GM12878 (cell line): ENCODE measurements at regions of chr15 and their contacts with region 1.

Region 1: GRCh38 chr15:81265944-81266775 is 57.8 kb downstream of the STARD5 start:
- DNase-seq: no peak
- ATAC-seq: peak; percentile 97
- H3K4me3 ChIP-seq: no peak overlapping the region
- H3K27ac ChIP-seq: no peak overlapping the region
- H3K4me1 ChIP-seq: peaks cover 22% of the 10 kb centered on the region
- H3K27me3 ChIP-seq: no peaks in the 10 kb centered on the region; a peak in 1 of 4 replicates
- CTCF ChIP-seq: peak; percentile 93 to 94 (median 94)
- EP300 ChIP-seq: no peak
- POLR2A ChIP-seq: no peak
- RAD21 ChIP-seq: peak; percentile 92

Region 2: DNA sequence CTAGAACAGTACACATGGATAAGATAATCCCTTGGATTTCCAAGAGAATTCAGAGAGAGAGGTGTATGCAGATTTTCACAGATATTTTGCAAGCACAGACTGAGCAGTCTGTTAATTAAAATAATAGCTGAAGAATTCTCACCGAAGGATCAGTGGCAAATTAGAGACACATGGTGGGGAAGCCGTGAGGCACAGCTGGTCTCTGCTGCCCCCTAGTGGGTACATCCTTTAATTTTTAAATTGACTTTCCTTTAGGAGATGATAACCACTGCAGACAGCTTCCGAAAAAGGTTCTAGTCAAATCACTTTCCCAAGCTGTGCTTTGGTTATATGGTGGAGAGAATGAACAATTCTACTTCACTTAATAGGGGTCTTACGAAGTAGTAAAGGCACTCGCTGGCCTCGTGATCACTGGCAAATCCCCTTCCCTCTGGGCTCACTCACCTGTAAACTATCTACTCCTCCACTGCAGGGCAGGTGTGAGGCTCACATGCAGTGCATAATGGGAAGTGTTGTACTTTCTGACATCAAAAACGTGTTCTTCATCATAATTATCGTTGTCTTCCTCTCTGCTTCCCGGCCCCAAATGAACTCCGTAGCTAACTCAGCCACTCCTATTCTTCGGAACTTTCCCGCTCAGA is 296.0 kb before region 1 on chr15:
- CTCF ChIA-PET with region 1: interaction called, 22 read pairs
- POLR2A ChIA-PET with region 1: interaction called, 3 read pairs
- RAD21 ChIA-PET with region 1: interaction called, 31 read pairs
- SMC1A ChIA-PET with region 1: interaction called, 14 read pairs
- in situ Hi-C with region 1: no loop called
- intact Hi-C with region 1: no loop called
- DNase-seq: no peak
- ATAC-seq: peak; percentile 85
- H3K4me3 ChIP-seq: no peak overlapping the region
- H3K27ac ChIP-seq: no peak overlapping the region
- H3K4me1 ChIP-seq: no peaks in the 10 kb centered on the region
- H3K27me3 ChIP-seq: no peaks in the 10 kb centered on the region
- CTCF ChIP-seq: peak; percentile 62 to 87 (median 74)
- EP300 ChIP-seq: no peak
- POLR2A ChIP-seq: no peak
- RAD21 ChIP-seq: peak; percentile 82

Region 3: DNA sequence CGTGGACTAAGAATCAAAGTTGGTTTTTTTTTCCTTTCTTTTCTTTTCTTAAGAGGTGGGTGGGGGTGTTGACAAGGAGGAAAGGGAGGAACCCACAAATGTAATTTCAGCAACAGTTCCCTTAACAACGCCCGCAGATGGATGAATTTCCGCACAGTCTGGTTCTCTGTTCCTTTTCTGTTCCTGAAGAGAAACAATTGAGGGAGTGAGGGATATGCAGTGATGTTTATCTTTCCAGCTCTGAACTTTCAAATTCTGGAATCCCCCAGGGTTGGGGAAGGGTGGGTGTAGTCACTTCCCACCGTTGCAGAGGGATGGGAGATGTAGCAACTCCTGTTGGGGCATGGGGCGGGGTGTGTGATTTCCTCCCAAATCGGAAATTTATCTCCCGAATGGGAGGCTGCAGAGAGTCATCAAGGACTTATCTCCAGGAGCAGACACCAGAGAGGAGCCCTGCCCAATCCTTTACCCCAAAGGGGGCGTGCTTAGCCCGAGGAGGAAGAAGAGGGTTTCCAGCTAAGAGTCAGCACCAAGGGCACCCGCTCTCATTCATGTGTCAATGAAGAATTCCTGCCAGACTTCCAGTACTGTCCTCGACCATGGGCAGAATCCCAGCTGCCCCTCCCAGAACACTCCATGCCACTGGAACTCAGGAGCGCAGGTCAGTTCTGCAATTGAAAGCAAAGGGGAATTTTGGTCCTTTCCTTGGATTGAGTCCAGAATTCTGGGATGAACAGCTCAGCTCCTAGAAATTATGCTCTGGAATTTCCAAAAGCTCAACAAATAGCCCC is 167.1 kb before region 1 on chr15:
- CTCF ChIA-PET with region 1: interaction called, 438 read pairs
- POLR2A ChIA-PET with region 1: no interaction called
- RAD21 ChIA-PET with region 1: interaction called, 130 read pairs
- SMC1A ChIA-PET with region 1: interaction called, 18 read pairs
- in situ Hi-C with region 1: no loop called
- intact Hi-C with region 1: no loop called
- DNase-seq: no peak
- ATAC-seq: no peak
- H3K4me3 ChIP-seq: no peak overlapping the region
- H3K27ac ChIP-seq: no peak overlapping the region
- H3K4me1 ChIP-seq: no peaks in the 10 kb centered on the region
- H3K27me3 ChIP-seq: peaks cover 0 to 14% of the 10 kb centered on the region in 2 experiments; a peak in 3 of 4 replicates
- CTCF ChIP-seq: no peak
- EP300 ChIP-seq: no peak
- POLR2A ChIP-seq: no peak
- RAD21 ChIP-seq: no peak

Region 4: GRCh38 chr15:81170511-81170910 is 95.6 kb before region 1 on chr15:
- CTCF ChIA-PET with region 1: interaction called, 21 read pairs
- POLR2A ChIA-PET with region 1: no interaction called
- RAD21 ChIA-PET with region 1: interaction called, 4 read pairs
- SMC1A ChIA-PET with region 1: interaction called, 5 read pairs
- in situ Hi-C with region 1: no loop called
- intact Hi-C with region 1: no loop called
- DNase-seq: no peak
- ATAC-seq: no peak
- H3K4me3 ChIP-seq: no peak overlapping the region
- H3K27ac ChIP-seq: no peak overlapping the region
- H3K4me1 ChIP-seq: no peaks in the 10 kb centered on the region
- H3K27me3 ChIP-seq: no peaks in the 10 kb centered on the region
- CTCF ChIP-seq: no peak
- EP300 ChIP-seq: no peak
- POLR2A ChIP-seq: no peak
- RAD21 ChIP-seq: no peak

Region 5: GRCh38 chr15:81296673-81297072 is 30.5 kb after region 1 on chr15:
- CTCF ChIA-PET with region 1: interaction called, 24 read pairs
- POLR2A ChIA-PET with region 1: no interaction called
- RAD21 ChIA-PET with region 1: interaction called, 17 read pairs
- SMC1A ChIA-PET with region 1: interaction called, 23 read pairs
- in situ Hi-C with region 1: no loop called
- intact Hi-C with region 1: no loop called
- DNase-seq: peak; percentile 95
- ATAC-seq: peak; percentile 44
- H3K4me3 ChIP-seq: peak overlapping the region; percentile 75
- H3K27ac ChIP-seq: peak overlapping the region; percentile 99
- H3K4me1 ChIP-seq: peaks cover 60% of the 10 kb centered on the region
- H3K27me3 ChIP-seq: no peaks in the 10 kb centered on the region
- CTCF ChIP-seq: no peak
- EP300 ChIP-seq: peak; percentile 78 to 90; a peak in 3 of 4 replicates
- POLR2A ChIP-seq: peak; percentile 79
- RAD21 ChIP-seq: peak; percentile 19; the same call in 1 of the 2 replicates

Region 6: GRCh38 chr15:81336568-81336967 is 70.4 kb after region 1 on chr15:
- CTCF ChIA-PET with region 1: interaction called, 242 read pairs
- POLR2A ChIA-PET with region 1: no interaction called
- RAD21 ChIA-PET with region 1: interaction called, 19 read pairs
- SMC1A ChIA-PET with region 1: interaction called, 32 read pairs
- in situ Hi-C with region 1: no loop called
- intact Hi-C with region 1: no loop called
- DNase-seq: no peak
- ATAC-seq: peak; percentile 89
- H3K4me3 ChIP-seq: no peak overlapping the region
- H3K27ac ChIP-seq: no peak overlapping the region
- H3K4me1 ChIP-seq: no peaks in the 10 kb centered on the region; the same call in 1 of the 2 replicates
- H3K27me3 ChIP-seq: no peaks in the 10 kb centered on the region
- CTCF ChIP-seq: peak; percentile 57 to 73 (median 66); a peak in 5 of 6 replicates
- EP300 ChIP-seq: no peak
- POLR2A ChIP-seq: no peak
- RAD21 ChIP-seq: peak; percentile 83

Region 7: DNA sequence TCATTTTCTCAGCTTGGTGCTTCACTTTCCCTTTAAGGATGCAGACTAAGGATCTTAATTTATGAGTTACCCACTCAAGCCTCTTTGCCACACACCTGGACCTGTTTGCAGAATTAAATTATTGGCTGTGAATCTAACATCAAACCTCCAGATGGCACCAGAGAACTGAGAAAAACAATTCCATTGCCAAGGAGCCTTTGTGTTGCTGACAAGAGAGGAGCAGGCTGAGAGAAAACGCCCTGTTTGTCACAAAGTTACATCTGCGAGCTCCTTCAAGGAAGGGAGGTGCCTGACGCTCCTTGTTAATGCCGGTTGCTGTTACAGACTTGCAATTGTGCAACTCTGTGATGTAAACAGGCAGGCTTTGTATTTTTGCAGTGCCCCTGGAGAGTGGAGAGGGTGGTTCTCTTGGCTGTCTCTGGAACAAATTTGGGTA is 144.2 kb after region 1 on chr15:
- CTCF ChIA-PET with region 1: interaction called, 24 read pairs
- POLR2A ChIA-PET with region 1: no interaction called
- RAD21 ChIA-PET with region 1: no interaction called
- SMC1A ChIA-PET with region 1: interaction called, 4 read pairs
- in situ Hi-C with region 1: no loop called
- intact Hi-C with region 1: no loop called
- DNase-seq: no peak
- ATAC-seq: peak; percentile 69
- H3K4me3 ChIP-seq: no peak overlapping the region
- H3K27ac ChIP-seq: no peak overlapping the region
- H3K4me1 ChIP-seq: no peaks in the 10 kb centered on the region
- H3K27me3 ChIP-seq: 0 out of 4 replicates have a peak, but pooled peaks cover 0 to 3% of the 10 kb centered on the region in 2 experiments
- CTCF ChIP-seq: peak; percentile 23 to 54 (median 33); a peak in 3 of 6 replicates
- EP300 ChIP-seq: no peak
- POLR2A ChIP-seq: no peak
- RAD21 ChIP-seq: peak; percentile 45

Region 8: DNA sequence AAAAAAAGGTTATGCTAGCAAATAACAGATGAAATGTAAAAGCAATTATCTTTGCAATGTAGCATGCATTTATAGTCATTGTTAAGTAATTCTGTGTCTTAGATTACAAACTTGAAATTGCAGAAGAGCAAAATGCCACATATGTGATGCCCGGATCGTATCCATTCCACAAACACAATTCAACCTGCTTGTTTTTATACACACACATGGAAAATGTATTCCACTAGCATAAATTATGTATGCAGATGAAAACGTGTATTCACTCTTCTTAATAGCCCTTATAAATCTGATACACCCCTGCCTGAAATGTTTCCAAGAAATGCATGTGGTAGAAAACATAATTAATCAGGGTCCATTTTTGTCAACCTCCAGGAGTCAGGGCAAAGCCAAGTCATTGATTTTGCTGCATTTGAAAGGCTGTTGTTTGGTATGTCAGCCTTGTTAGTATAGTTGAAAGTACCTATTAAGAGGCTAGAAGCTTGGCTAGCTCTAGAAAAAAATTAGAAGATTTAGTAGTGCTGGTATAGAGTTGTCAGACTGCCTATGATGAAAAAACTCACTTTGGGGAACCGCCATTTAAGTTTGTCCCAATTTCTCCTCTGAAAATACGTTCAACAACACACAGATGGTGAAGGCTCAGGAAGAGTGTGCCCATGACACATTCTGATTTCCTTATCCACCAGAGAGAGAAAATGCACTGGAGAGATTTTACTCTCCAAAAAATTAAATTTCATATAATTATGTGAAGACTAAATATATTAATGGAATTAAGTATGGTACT is 177.1 kb after region 1 on chr15:
- CTCF ChIA-PET with region 1: no interaction called
- POLR2A ChIA-PET with region 1: no interaction called
- RAD21 ChIA-PET with region 1: no interaction called
- SMC1A ChIA-PET with region 1: no interaction called
- in situ Hi-C with region 1: no loop called
- intact Hi-C with region 1: no loop called
- DNase-seq: no peak
- ATAC-seq: no peak
- H3K4me3 ChIP-seq: no peak overlapping the region
- H3K27ac ChIP-seq: no peak overlapping the region
- H3K4me1 ChIP-seq: no peaks in the 10 kb centered on the region
- H3K27me3 ChIP-seq: no peaks in the 10 kb centered on the region
- CTCF ChIP-seq: no peak
- EP300 ChIP-seq: no peak
- POLR2A ChIP-seq: no peak
- RAD21 ChIP-seq: no peak